Ovary (tissue), 10 donors: ENCODE measurements at regions of chr22 and their contacts with region 1.

Region 1: GRCh38 chr22:30104501-30105156 is 24.4 kb downstream of the HORMAD2 start:
- DNase-seq: no peak
- H3K4me3 ChIP-seq: no peak overlapping the region
- H3K27ac ChIP-seq: no peak overlapping the region
- H3K4me1 ChIP-seq: no peaks in the 10 kb centered on the region
- H3K27me3 ChIP-seq: no peaks in the 10 kb centered on the region
- CTCF ChIP-seq: no peak
- EP300 ChIP-seq: no peak
- POLR2A ChIP-seq: no peak

Region 2: GRCh38 chr22:30245985-30246901 is 141.6 kb after region 1 on chr22 and contains the start of gene LIF:
- intact Hi-C with region 1: loop called in 1 of 4 experiments (anchors 5 kb)
- DNase-seq: peak in 1 of 5 donors; percentile 52
- H3K4me3 ChIP-seq: peak within 1 kb of the TSS; percentile 42
- H3K27ac ChIP-seq: no peak within 1 kb of the TSS
- H3K4me1 ChIP-seq: peaks cover 6% of the 10 kb centered on the region
- H3K27me3 ChIP-seq: no peaks in the 10 kb centered on the region
- CTCF ChIP-seq: peak in 2 of 3 donors; percentile 10 to 33
- EP300 ChIP-seq: no peak
- POLR2A ChIP-seq: no peak
- total RNA-seq, gene LIF: 0.35 to 8.3 (median 1.9) TPM

Region 3: GRCh38 chr22:30254314-30254713 is 149.7 kb after region 1 on chr22:
- intact Hi-C with region 1: loop called in 3 of 4 experiments (anchors 2 to 5 kb)
- DNase-seq: no peak
- H3K4me3 ChIP-seq: no peak overlapping the region
- H3K27ac ChIP-seq: no peak overlapping the region
- H3K4me1 ChIP-seq: peaks cover 6% of the 10 kb centered on the region
- H3K27me3 ChIP-seq: no peaks in the 10 kb centered on the region
- CTCF ChIP-seq: no peak
- EP300 ChIP-seq: no peak
- POLR2A ChIP-seq: no peak

Region 4: GRCh38 chr22:30485362-30485988 is 380.8 kb after region 1 on chr22:
- intact Hi-C with region 1: loop called in 1 of 4 experiments (anchors 10 kb)
- DNase-seq: peak; percentile 63 to 83 (median 74)
- H3K4me3 ChIP-seq: no peak overlapping the region
- H3K27ac ChIP-seq: no peak overlapping the region
- H3K4me1 ChIP-seq: no peaks in the 10 kb centered on the region
- H3K27me3 ChIP-seq: no peaks in the 10 kb centered on the region
- CTCF ChIP-seq: peak; percentile 90 to 93 (median 93)
- EP300 ChIP-seq: no peak
- POLR2A ChIP-seq: no peak